Mammary epithelial cell (primary cell): ENCODE measurements at regions of chr4 and their contacts with region 1.

Region 1: GRCh38 chr4:473570-474457 is 25.1 kb downstream of the ZNF721 start:
- DNase-seq: peak; percentile 99
- H3K4me3 ChIP-seq: peak overlapping the region; percentile 73 to 77 (median 77)
- H3K27ac ChIP-seq: peak overlapping the region; percentile 85
- H3K4me1 ChIP-seq: peaks cover 14% of the 10 kb centered on the region
- H3K27me3 ChIP-seq: no peaks in the 10 kb centered on the region
- CTCF ChIP-seq: no peak

Region 2: GRCh38 chr4:498328-498904 is 24.6 kb after region 1 on chr4:
- CTCF ChIA-PET with region 1: no interaction called
- dilution Hi-C with region 1: no loop called
- in situ Hi-C with region 1: no loop called
- intact Hi-C with region 1: loop called (anchors 1 kb)
- DNase-seq: no peak
- H3K4me3 ChIP-seq: peak overlapping the region; percentile 95 to 98 (median 95)
- H3K27ac ChIP-seq: peak overlapping the region; percentile 81
- H3K4me1 ChIP-seq: peaks cover 15% of the 10 kb centered on the region
- H3K27me3 ChIP-seq: no peaks in the 10 kb centered on the region
- CTCF ChIP-seq: no peak

Region 3: DNA sequence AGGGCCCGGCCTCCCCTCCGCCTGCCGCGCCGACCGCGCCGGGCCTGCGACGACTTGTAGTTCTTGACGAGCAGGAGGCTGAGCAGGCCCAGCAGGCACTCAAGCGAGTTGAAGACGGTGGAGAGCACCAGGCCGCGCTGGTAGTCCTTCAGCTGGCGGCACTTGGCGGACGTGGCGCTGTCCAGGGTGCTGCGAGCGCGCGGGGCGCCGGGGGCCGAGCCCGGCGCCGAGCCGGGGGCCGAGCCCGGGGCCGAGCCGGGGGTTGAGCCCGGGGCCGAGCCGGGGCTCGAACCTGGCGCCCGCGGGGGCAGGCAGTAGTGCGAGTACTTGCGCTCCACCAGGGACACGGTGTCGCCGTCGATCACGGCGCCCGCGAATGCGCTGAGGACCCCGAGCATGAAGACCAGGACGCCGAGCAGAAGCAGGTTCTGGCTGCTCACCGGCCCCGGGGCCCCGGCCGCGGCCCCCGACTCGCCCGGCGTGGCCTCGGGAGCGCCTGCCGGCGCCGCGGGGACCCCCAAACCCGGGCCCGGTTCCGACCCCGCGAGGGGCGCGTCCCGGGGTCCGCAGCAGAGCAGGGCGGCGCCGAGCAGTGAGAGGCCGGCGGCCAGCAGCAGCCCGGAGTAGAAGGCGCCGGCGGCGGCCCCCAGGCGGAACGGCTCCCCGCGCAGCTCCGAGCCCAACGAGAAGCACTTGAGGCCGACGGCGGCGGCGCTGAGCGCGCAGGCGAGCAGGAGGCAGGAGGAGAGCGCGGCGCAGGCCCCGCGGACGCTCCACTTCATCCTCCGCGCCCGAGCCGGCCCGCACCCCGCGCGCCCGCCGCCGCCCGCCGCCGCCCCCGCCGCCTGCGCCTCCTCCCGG is 101.7 kb after region 1 on chr4:
- CTCF ChIA-PET with region 1: no interaction called
- dilution Hi-C with region 1: no loop called
- in situ Hi-C with region 1: no loop called
- intact Hi-C with region 1: no loop called
- DNase-seq: peak; percentile 56
- H3K4me3 ChIP-seq: no peak overlapping the region
- H3K27ac ChIP-seq: no peak overlapping the region
- H3K4me1 ChIP-seq: peaks cover 10% of the 10 kb centered on the region
- H3K27me3 ChIP-seq: peaks cover 40% of the 10 kb centered on the region
- CTCF ChIP-seq: no peak